Vagina (tissue), 2 donors: ENCODE measurements at regions of chr4 and their contacts with region 1.

Region 1: DNA sequence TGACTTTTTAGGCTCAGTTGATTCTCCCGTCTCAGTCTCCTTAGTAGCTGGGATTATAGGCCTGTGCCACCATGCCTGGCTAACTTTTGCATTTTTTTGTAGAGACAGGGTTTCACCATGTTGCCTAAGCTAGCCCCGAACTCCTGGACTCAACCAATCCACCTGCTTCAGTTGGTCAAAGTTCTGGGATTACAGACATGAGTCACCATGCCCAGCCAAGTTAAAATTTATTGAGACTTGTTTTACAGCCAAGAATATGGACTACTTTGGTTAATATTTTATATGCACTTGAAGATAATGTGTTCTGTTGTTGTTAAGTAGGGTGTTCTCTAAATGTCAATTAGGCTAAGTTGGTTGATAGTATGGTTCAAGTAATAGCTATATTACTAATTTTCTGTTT is 58.7 kb downstream of the CYTL1 start:
- DNase-seq: peak in 1 of 2 donors; percentile 12
- H3K4me3 ChIP-seq: no peak overlapping the region
- H3K27ac ChIP-seq: no peak overlapping the region
- H3K4me1 ChIP-seq: no peaks in the 10 kb centered on the region
- H3K27me3 ChIP-seq: no peaks in the 10 kb centered on the region
- CTCF ChIP-seq: no peak
- POLR2A ChIP-seq: no peak

Region 2: GRCh38 chr4:6963139-6963611 is 2002.6 kb after region 1 on chr4:
- intact Hi-C with region 1: loop called (anchors 5 kb)
- DNase-seq: no peak
- H3K4me3 ChIP-seq: no peak overlapping the region
- H3K27ac ChIP-seq: no peak overlapping the region
- H3K4me1 ChIP-seq: no peaks in the 10 kb centered on the region
- H3K27me3 ChIP-seq: no peaks in the 10 kb centered on the region
- CTCF ChIP-seq: no peak
- POLR2A ChIP-seq: no peak